IMR-90 (cell line): ENCODE measurements at regions of chr16 and their contacts with region 1.

Region 1: DNA sequence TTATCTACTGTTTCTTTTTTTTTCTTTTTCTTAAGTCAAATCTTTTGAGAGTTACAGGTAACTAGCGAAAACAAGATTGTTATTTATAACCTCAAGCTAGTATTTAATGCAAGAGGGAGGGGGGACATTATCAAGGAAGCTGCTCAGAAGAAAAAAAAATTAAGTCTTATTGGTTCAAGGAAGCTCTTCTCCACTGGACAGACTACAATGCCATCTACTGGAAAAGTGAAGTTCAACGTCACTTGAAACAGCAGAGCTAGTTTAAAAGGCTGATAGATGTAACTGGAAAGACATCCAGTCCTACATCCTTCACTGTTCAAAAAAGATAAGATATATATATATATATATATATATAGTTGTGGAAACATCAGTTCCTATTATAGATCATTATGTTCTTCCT is 418.0 kb upstream of the PSMD7 start:
- DNase-seq: peak; percentile 76
- ATAC-seq: peak; percentile 77
- H3K4me3 ChIP-seq: no peak overlapping the region
- H3K27ac ChIP-seq: no peak overlapping the region
- H3K4me1 ChIP-seq: no peaks in the 10 kb centered on the region
- H3K27me3 ChIP-seq: no peaks in the 10 kb centered on the region
- CTCF ChIP-seq: peak; percentile 67
- POLR2A ChIP-seq: no peak
- RAD21 ChIP-seq: peak; percentile 84

Region 2: GRCh38 chr16:72400257-72400882 is 1478.2 kb before region 1 on chr16:
- CTCF ChIA-PET with region 1: interaction called, 4 read pairs
- POLR2A ChIA-PET with region 1: no interaction called
- dilution Hi-C with region 1: no loop called
- in situ Hi-C with region 1: no loop called
- intact Hi-C with region 1: loop called (anchors 5 kb)
- DNase-seq: peak; percentile 62
- ATAC-seq: peak; percentile 91
- H3K4me3 ChIP-seq: no peak overlapping the region
- H3K27ac ChIP-seq: no peak overlapping the region
- H3K4me1 ChIP-seq: no peaks in the 10 kb centered on the region; the same call in 1 of the 2 replicates
- H3K27me3 ChIP-seq: no peaks in the 10 kb centered on the region
- CTCF ChIP-seq: peak; percentile 66
- POLR2A ChIP-seq: no peak
- RAD21 ChIP-seq: peak; percentile 54

Region 3: GRCh38 chr16:72689851-72690250 is 1188.8 kb before region 1 on chr16:
- CTCF ChIA-PET with region 1: no interaction called
- POLR2A ChIA-PET with region 1: no interaction called
- dilution Hi-C with region 1: no loop called
- in situ Hi-C with region 1: no loop called
- intact Hi-C with region 1: loop called (anchors 10 kb)
- DNase-seq: peak; percentile 17
- ATAC-seq: no peak
- H3K4me3 ChIP-seq: no peak overlapping the region
- H3K27ac ChIP-seq: no peak overlapping the region
- H3K4me1 ChIP-seq: no peaks in the 10 kb centered on the region
- H3K27me3 ChIP-seq: no peaks in the 10 kb centered on the region
- CTCF ChIP-seq: 0 out of 2 replicates have a peak, but pooled peaks have one; percentile 18
- POLR2A ChIP-seq: no peak
- RAD21 ChIP-seq: peak; percentile 16; the same call in 1 of the 2 replicates

Region 4: GRCh38 chr16:73669535-73670274 is 208.9 kb before region 1 on chr16:
- CTCF ChIA-PET with region 1: no interaction called
- POLR2A ChIA-PET with region 1: no interaction called
- dilution Hi-C with region 1: no loop called
- in situ Hi-C with region 1: no loop called
- intact Hi-C with region 1: no loop called
- DNase-seq: no peak
- ATAC-seq: no peak
- H3K4me3 ChIP-seq: no peak overlapping the region
- H3K27ac ChIP-seq: no peak overlapping the region
- H3K4me1 ChIP-seq: no peaks in the 10 kb centered on the region
- H3K27me3 ChIP-seq: no peaks in the 10 kb centered on the region
- CTCF ChIP-seq: no peak
- POLR2A ChIP-seq: no peak
- RAD21 ChIP-seq: no peak

Region 5: DNA sequence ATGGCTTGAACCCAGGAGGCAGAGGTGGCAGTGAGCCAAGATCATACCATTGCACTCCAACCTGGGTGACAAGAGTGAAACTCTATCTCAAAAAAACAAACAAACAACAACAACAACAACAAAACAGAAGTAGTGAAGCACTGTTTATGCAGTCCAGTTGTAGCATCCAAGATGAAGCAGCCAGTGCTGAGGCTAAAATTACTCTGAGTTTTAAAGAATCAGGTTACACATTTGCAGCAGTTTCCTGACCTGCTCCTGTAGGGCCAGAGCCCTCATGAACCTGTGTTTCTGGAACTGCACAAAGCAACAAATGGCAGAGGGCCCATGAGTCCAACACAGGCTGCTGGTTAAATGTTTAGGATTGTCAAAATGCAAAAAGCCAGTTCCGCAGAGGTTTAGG is 81.5 kb before region 1 on chr16:
- CTCF ChIA-PET with region 1: no interaction called
- POLR2A ChIA-PET with region 1: no interaction called
- dilution Hi-C with region 1: no loop called
- in situ Hi-C with region 1: no loop called
- intact Hi-C with region 1: no loop called
- DNase-seq: no peak
- ATAC-seq: no peak
- H3K4me3 ChIP-seq: no peak overlapping the region
- H3K27ac ChIP-seq: no peak overlapping the region
- H3K4me1 ChIP-seq: no peaks in the 10 kb centered on the region
- H3K27me3 ChIP-seq: no peaks in the 10 kb centered on the region
- CTCF ChIP-seq: no peak
- POLR2A ChIP-seq: no peak
- RAD21 ChIP-seq: no peak

Region 6: GRCh38 chr16:74275002-74275636 is 396.5 kb after region 1 on chr16:
- CTCF ChIA-PET with region 1: no interaction called
- POLR2A ChIA-PET with region 1: no interaction called
- dilution Hi-C with region 1: no loop called
- in situ Hi-C with region 1: no loop called
- intact Hi-C with region 1: loop called (anchors 5 kb)
- DNase-seq: peak; percentile 28
- ATAC-seq: no peak
- H3K4me3 ChIP-seq: no peak overlapping the region
- H3K27ac ChIP-seq: no peak overlapping the region
- H3K4me1 ChIP-seq: no peaks in the 10 kb centered on the region
- H3K27me3 ChIP-seq: no peaks in the 10 kb centered on the region; the same call in 1 of the 2 replicates
- CTCF ChIP-seq: peak; percentile 62
- POLR2A ChIP-seq: no peak
- RAD21 ChIP-seq: peak; percentile 70